ENCODE measurements at regions of chr3 and their contacts with region 1.

Region 1: DNA sequence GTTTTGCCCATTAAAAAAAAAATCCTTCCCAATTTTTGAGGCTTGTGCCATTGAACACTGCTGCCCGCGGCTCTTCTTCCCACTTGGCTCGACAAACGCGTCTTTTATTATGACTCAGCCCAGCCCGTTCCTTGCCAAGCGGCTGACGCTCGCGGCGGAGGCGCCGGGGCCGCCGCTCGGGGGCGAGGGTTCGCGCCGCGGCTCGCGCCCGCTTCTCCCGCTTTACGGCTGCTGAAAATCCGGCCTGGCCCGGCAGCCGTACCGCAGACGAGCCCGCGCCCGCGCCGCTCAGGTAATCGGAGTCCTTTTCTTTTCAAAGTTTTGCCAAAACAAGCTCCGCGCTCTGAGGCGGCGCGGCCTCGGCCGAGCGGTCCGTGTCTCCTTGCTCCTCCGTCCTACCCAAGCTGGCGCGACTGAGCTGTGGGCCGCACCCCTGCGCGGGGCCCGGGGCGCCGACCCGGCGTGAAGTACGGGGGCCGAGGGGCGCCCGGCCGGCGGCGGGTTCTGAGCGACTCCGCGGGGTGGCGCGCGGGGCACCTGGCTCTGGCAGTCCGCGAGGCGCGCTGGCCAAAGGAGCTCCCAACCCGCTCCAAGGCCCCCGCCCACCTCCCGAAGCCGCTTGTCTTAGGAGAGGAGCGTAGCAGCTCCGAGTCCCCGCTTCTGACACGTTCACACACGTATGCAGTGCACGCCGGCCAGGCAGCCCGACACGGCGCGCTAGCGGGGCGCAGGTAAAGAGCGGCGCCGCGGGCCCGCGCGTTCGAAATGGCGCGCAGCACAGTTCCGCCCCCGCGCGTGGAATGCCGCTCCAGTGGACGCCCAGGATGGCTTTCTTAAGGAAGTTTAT is 418.2 kb upstream of the NAALADL2 start:
- DNase-seq: peak; percentile 90
- ATAC-seq: peak; percentile 90 to 91

Region 2: GRCh38 chr3:173761161-173761560 is 679.8 kb before region 1 on chr3:
- intact Hi-C with region 1: no loop called
- DNase-seq: no peak
- ATAC-seq: no peak

Region 3: DNA sequence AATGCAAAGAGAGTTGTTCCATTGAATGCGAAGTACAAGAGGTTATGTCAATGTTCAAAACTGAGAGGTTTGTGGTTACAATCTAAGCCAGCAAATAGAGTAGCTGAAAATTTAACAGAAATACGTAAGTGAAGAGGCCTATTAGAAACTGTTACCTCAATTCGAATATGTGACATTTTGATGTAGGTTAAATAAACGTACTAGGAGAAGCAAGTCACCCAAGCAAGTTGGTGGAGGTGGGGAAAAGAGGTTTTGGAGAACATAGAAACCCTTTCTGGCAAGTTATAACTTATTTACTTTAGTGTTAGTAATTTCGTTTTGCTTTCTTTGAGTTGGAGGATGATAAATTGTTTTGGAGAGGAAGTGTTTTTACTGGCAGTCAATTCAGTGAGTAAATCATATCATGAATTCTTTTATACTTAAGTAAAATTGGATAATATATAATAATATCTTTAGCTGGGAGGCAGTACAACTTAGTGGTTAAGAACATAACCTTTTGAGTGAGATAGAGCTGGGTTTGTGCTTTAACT is 327.0 kb after region 1 on chr3:
- intact Hi-C with region 1: loop called in 1 of 2 experiments (anchors 5 kb)
- DNase-seq: no peak
- ATAC-seq: peak in 1 of 2 donors; percentile 82

Region 4: GRCh38 chr3:174955513-174956001 is 514.6 kb after region 1 on chr3:
- intact Hi-C with region 1: no loop called
- DNase-seq: no peak
- ATAC-seq: no peak